Activated CD8-positive, alpha-beta T cell treated with anti-CD3 and anti-CD28 coated beads for 36 hours (primary cell): ENCODE measurements at regions of chr20 and their contacts with region 1.

Region 1: GRCh38 chr20:50588034-50588611 is 77.9 kb downstream of the PTPN1 start:
- DNase-seq: peak; percentile 84
- ATAC-seq: peak; percentile 67
- H3K4me3 Mint-ChIP-seq: no peak overlapping the region
- H3K27ac Mint-ChIP-seq: no peak overlapping the region
- H3K4me1 Mint-ChIP-seq: peaks cover 2% of the 10 kb centered on the region
- H3K27me3 Mint-ChIP-seq: no peaks in the 10 kb centered on the region
- CTCF ChIP-seq: peak; percentile 98

Region 2: DNA sequence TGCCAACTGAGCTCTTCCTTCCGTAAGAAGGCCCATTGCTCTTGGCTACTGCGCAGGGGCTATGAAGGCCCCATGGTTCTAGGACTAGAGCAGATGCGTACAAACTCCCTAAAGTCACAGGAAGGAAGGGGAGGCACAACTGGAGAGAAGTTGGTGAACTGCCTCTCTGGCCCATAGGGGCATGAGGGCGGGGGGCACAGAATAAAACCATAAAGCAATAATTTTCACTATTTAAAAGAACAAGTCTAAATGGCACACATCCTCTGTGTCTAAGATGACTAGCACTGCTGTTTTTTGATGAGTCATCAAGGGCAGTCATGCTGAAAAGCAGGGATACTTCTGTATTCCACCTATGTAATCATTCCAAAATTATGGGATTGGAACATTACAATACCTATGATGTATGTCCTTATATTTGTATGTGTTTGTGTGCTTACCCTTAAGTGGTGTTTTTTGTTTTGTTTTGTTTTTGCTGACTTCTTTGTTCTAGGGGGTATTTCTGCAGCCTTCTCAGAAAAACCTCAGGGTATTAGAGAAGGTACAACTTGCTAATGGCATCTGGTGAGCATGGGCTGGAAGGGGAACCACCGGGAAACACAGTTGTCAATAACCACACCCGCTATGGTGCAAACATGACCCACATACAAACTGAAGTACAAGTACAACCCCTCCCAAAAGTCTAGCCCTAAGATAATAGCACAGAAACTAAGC is 911.4 kb before region 1 on chr20:
- CTCF ChIA-PET with region 1: no interaction called
- POLR2A ChIA-PET with region 1: no interaction called
- intact Hi-C with region 1: no loop called
- DNase-seq: peak; percentile 74
- ATAC-seq: peak; percentile 79
- H3K4me3 Mint-ChIP-seq: no peak overlapping the region
- H3K27ac Mint-ChIP-seq: peak overlapping the region; percentile 86
- H3K4me1 Mint-ChIP-seq: peaks cover 71% of the 10 kb centered on the region
- H3K27me3 Mint-ChIP-seq: no peaks in the 10 kb centered on the region
- CTCF ChIP-seq: no peak

Region 3: DNA sequence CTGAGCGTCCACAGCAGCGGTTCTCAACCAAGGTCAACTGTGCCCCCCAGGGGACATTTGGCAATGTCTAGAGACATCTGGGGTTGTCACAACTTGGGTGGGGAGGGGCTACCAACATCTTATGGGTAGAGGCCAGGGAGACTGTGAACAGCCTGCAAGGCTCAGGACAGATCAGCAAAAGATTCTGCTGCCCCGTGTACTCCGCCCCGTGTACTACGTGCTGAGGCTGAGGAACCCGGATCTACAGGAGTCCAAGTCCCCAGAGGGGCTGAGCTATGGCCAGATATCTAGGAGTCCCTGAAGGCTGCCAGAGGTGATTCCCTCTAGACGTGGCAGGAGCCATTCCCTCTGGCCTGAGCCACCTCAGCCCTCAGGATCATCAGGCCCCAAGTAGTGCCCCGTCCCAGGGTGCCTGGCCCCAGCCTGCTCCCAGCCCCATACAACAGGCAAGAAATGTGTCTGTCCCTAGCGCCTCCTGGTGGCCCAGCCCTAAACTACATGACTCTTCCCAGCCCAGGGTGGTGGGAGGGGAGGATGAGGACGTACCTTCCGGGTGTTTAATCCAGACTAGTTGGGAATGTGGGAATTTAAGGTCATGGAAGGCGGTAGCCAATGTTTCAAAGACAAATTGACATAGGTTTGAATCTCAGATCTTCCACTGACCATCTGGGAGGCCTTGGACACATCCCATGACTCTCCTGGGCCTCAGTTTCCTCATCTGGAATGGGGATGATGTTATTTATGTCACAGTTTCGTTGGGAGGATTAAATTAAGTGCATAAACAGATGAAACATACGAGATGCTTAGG is 127.5 kb before region 1 on chr20:
- CTCF ChIA-PET with region 1: interaction called, 16 read pairs
- POLR2A ChIA-PET with region 1: no interaction called
- intact Hi-C with region 1: no loop called
- DNase-seq: peak; percentile 89
- ATAC-seq: peak; percentile 92
- H3K4me3 Mint-ChIP-seq: no peak overlapping the region
- H3K27ac Mint-ChIP-seq: no peak overlapping the region
- H3K4me1 Mint-ChIP-seq: peaks cover 3% of the 10 kb centered on the region
- H3K27me3 Mint-ChIP-seq: peaks cover 5% of the 10 kb centered on the region
- CTCF ChIP-seq: peak; percentile 86

Region 4: GRCh38 chr20:50478162-50479036 is 109.7 kb before region 1 on chr20:
- CTCF ChIA-PET with region 1: interaction called, 20 read pairs
- POLR2A ChIA-PET with region 1: no interaction called
- intact Hi-C with region 1: no loop called
- DNase-seq: peak; percentile 85
- ATAC-seq: peak; percentile 99
- H3K4me3 Mint-ChIP-seq: no peak overlapping the region
- H3K27ac Mint-ChIP-seq: no peak overlapping the region
- H3K4me1 Mint-ChIP-seq: peaks cover 15% of the 10 kb centered on the region
- H3K27me3 Mint-ChIP-seq: no peaks in the 10 kb centered on the region
- CTCF ChIP-seq: peak; percentile 81

Region 5: GRCh38 chr20:50484276-50484976 is 103.7 kb before region 1 on chr20:
- CTCF ChIA-PET with region 1: interaction called, 20 read pairs
- POLR2A ChIA-PET with region 1: no interaction called
- intact Hi-C with region 1: no loop called
- DNase-seq: no peak
- ATAC-seq: no peak
- H3K4me3 Mint-ChIP-seq: peak overlapping the region; percentile 76
- H3K27ac Mint-ChIP-seq: peak overlapping the region; percentile 88
- H3K4me1 Mint-ChIP-seq: peaks cover 20% of the 10 kb centered on the region
- H3K27me3 Mint-ChIP-seq: no peaks in the 10 kb centered on the region
- CTCF ChIP-seq: no peak

Region 6: DNA sequence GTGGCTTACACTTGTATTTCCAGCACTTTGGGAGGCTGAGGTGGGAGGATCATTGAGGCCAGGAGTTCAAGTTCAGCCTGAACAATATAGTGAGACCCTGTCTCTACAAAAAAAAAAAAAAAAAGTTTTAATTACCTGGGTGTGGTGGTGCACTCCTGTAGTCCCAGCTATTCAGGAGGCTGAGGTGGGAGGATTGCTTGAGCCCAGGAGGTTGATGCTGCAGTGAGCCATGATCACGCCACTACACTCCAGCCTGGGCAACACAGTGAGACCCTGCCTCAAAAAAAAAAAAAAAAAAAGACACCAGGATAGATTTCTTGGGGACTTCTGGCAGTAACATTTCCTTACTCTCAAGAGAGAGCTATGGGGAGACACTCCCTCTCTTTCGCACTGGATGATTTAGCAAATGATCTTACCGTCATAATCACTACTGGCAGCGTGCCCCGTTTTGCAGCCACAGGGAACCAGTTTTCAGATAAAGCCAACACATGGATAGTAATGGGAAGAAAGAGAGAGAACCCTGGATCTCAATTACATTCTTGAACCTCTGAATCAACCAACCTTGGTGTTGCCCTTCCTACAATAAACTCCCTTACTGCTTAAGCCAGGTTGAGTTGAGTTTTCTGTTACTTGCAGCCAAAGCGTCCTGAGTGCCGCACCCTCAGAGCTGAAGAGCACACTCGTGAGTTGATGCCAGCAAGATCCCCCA is 96.0 kb before region 1 on chr20:
- CTCF ChIA-PET with region 1: interaction called, 12 read pairs
- POLR2A ChIA-PET with region 1: no interaction called
- intact Hi-C with region 1: no loop called
- DNase-seq: no peak
- ATAC-seq: no peak
- H3K4me3 Mint-ChIP-seq: no peak overlapping the region
- H3K27ac Mint-ChIP-seq: peak overlapping the region; percentile 66
- H3K4me1 Mint-ChIP-seq: peaks cover 30% of the 10 kb centered on the region
- H3K27me3 Mint-ChIP-seq: no peaks in the 10 kb centered on the region
- CTCF ChIP-seq: no peak

Region 7: DNA sequence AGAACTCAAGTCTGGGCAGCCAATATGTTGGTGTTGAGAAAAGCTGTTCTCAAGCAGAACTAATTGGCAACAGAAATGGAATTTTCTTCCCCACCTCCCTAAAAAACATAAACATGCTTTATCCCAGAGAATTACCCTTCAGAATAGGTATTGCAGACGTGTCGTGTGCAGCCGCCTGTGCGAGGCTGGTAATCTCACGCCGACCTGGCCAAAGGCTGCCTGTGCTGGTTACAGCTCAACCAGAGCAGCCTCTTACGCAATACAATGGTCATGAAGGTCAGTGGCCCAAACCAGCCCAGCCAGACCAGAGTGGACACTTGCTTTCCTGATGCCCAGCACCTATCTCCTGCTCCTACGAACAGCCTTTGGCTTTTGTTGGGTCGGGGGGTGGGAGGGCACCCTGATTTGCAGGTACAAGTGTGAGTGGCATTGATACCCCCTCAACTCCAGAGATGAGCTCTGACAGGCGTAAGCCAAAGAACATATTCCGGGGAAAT is 92.3 kb after region 1 on chr20:
- CTCF ChIA-PET with region 1: no interaction called
- POLR2A ChIA-PET with region 1: no interaction called
- intact Hi-C with region 1: no loop called
- DNase-seq: no peak
- ATAC-seq: no peak
- H3K4me3 Mint-ChIP-seq: no peak overlapping the region
- H3K27ac Mint-ChIP-seq: no peak overlapping the region
- H3K4me1 Mint-ChIP-seq: no peaks in the 10 kb centered on the region
- H3K27me3 Mint-ChIP-seq: no peaks in the 10 kb centered on the region
- CTCF ChIP-seq: no peak

Region 8: GRCh38 chr20:50690634-50691572 is 102.8 kb after region 1 on chr20 and contains the start of gene RIPOR3:
- CTCF ChIA-PET with region 1: no interaction called
- POLR2A ChIA-PET with region 1: no interaction called
- intact Hi-C with region 1: no loop called
- DNase-seq: peak; percentile 9
- ATAC-seq: no peak
- H3K4me3 Mint-ChIP-seq: no peak within 1 kb of the TSS
- H3K27ac Mint-ChIP-seq: no peak within 1 kb of the TSS
- H3K4me1 Mint-ChIP-seq: peaks cover 8% of the 10 kb centered on the region
- H3K27me3 Mint-ChIP-seq: peaks cover 36% of the 10 kb centered on the region
- CTCF ChIP-seq: no peak
- total RNA-seq, gene RIPOR3: not detected